CD4-positive, alpha-beta T cell (primary cell): ENCODE measurements at regions of chr2 and their contacts with region 1.

Region 1: DNA sequence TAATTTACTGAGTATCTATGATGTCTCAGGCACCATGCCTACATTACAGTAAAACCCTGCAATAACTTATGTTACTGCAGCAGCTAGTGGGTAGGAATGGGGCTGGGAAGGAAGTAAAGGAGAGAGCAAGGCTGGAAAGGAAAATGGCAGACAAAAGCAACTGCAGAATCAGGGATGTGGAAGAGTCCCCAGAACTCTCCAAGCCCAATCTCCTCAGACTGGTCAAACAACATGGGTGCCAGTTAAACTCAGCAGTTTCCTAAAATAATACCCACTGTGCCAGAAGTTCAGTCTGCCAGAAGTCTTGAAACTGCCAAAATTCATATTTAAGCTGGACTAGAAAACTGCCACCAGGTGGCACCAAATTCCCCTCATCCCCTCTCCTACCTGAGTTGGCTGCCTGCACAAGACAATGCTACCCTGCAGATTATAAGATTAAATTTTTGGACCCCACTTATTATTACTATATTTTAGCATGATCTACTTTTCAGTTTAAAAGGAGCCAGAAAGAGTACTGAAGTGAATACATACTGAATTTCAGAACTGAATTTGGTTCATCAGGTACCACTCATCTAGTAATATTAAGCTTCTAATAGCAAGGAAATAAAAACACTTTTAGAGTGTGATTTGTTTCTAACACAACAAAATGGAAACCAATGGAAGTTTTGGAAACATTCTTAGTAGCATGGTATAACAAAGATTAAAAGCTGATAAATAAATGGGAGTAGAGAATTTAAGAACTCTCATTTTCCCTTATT is 86.8 kb upstream of the DNER start:
- DNase-seq: peak; percentile 62 to 87 (median 70)
- ATAC-seq: peak; percentile 73
- H3K4me3 ChIP-seq: no peak overlapping the region
- H3K4me3 Mint-ChIP-seq: no peak overlapping the region
- H3K27ac ChIP-seq: no peak overlapping the region
- H3K27ac Mint-ChIP-seq: peak overlapping the region; percentile 8
- H3K4me1 ChIP-seq: no peaks in the 10 kb centered on the region
- H3K4me1 Mint-ChIP-seq: peaks cover 11% of the 10 kb centered on the region
- H3K27me3 ChIP-seq: no peaks in the 10 kb centered on the region
- H3K27me3 Mint-ChIP-seq: no peaks in the 10 kb centered on the region
- CTCF ChIP-seq: peak; percentile 87

Region 2: GRCh38 chr2:229815858-229816257 is 14.7 kb after region 1 on chr2:
- CTCF ChIA-PET with region 1: interaction called, 23 read pairs
- POLR2A ChIA-PET with region 1: no interaction called
- intact Hi-C with region 1: no loop called
- DNase-seq: no peak
- ATAC-seq: no peak
- H3K4me3 ChIP-seq: no peak overlapping the region
- H3K4me3 Mint-ChIP-seq: no peak overlapping the region
- H3K27ac ChIP-seq: no peak overlapping the region
- H3K27ac Mint-ChIP-seq: peak overlapping the region; percentile 9
- H3K4me1 ChIP-seq: no peaks in the 10 kb centered on the region
- H3K4me1 Mint-ChIP-seq: peaks cover 7% of the 10 kb centered on the region
- H3K27me3 ChIP-seq: no peaks in the 10 kb centered on the region
- H3K27me3 Mint-ChIP-seq: no peaks in the 10 kb centered on the region
- CTCF ChIP-seq: no peak

Region 3: GRCh38 chr2:229884775-229885699 is 83.9 kb after region 1 on chr2:
- CTCF ChIA-PET with region 1: interaction called, 5 read pairs
- POLR2A ChIA-PET with region 1: no interaction called
- intact Hi-C with region 1: loop called in 1 of 2 experiments (anchors 1 kb)
- DNase-seq: no peak
- ATAC-seq: no peak
- H3K4me3 ChIP-seq: no peak overlapping the region
- H3K4me3 Mint-ChIP-seq: no peak overlapping the region
- H3K27ac ChIP-seq: no peak overlapping the region
- H3K27ac Mint-ChIP-seq: peak overlapping the region; percentile 61
- H3K4me1 ChIP-seq: no peaks in the 10 kb centered on the region
- H3K4me1 Mint-ChIP-seq: peaks cover 65% of the 10 kb centered on the region
- H3K27me3 ChIP-seq: no peaks in the 10 kb centered on the region
- H3K27me3 Mint-ChIP-seq: no peaks in the 10 kb centered on the region
- CTCF ChIP-seq: no peak

Region 4: DNA sequence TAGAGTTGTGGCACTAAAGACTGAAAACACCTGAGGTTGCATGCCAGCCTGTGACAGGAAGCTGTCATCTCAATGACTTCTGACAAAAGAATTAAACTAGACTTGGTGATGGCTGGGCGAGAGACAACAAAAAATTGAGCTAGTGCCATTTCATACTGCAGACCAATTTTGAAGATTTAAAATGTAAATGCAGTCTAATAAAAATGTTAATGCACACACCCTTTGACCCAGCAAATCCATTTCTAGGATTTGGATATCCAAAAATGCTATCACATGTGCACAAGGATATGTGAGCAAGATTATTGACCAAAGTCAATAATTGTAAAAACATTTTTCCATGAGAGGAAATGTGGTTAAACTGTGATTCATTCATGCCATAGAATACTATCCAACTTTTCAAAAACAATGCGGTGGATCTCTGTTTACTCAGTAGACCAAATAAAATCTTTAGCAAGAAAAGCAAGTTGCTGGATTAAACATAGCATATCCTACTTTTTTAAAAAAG is 126.7 kb after region 1 on chr2:
- CTCF ChIA-PET with region 1: interaction called, 10 read pairs
- POLR2A ChIA-PET with region 1: no interaction called
- intact Hi-C with region 1: no loop called
- DNase-seq: no peak
- ATAC-seq: no peak
- H3K4me3 ChIP-seq: no peak overlapping the region
- H3K4me3 Mint-ChIP-seq: no peak overlapping the region
- H3K27ac ChIP-seq: no peak overlapping the region
- H3K27ac Mint-ChIP-seq: no peak overlapping the region
- H3K4me1 ChIP-seq: peaks cover 4% of the 10 kb centered on the region
- H3K4me1 Mint-ChIP-seq: peaks cover 13% of the 10 kb centered on the region
- H3K27me3 ChIP-seq: no peaks in the 10 kb centered on the region
- H3K27me3 Mint-ChIP-seq: no peaks in the 10 kb centered on the region
- CTCF ChIP-seq: no peak

Region 5: GRCh38 chr2:230068016-230068650 is 267.0 kb after region 1 on chr2:
- CTCF ChIA-PET with region 1: no interaction called
- POLR2A ChIA-PET with region 1: no interaction called
- intact Hi-C with region 1: loop called in 1 of 2 experiments (anchors 5 kb)
- DNase-seq: peak in 13 of 14 experiments; percentile 5 to 63 (median 30)
- ATAC-seq: peak; percentile 45
- H3K4me3 ChIP-seq: peak overlapping the region; percentile 50
- H3K4me3 Mint-ChIP-seq: peak overlapping the region; percentile 94
- H3K27ac ChIP-seq: no peak overlapping the region
- H3K27ac Mint-ChIP-seq: peak overlapping the region; percentile 69
- H3K4me1 ChIP-seq: peaks cover 17% of the 10 kb centered on the region
- H3K4me1 Mint-ChIP-seq: peaks cover 6% of the 10 kb centered on the region
- H3K27me3 ChIP-seq: peaks cover 6 to 7% of the 10 kb centered on the region in 2 experiments
- H3K27me3 Mint-ChIP-seq: peaks cover 8% of the 10 kb centered on the region
- CTCF ChIP-seq: no peak

Region 6: DNA sequence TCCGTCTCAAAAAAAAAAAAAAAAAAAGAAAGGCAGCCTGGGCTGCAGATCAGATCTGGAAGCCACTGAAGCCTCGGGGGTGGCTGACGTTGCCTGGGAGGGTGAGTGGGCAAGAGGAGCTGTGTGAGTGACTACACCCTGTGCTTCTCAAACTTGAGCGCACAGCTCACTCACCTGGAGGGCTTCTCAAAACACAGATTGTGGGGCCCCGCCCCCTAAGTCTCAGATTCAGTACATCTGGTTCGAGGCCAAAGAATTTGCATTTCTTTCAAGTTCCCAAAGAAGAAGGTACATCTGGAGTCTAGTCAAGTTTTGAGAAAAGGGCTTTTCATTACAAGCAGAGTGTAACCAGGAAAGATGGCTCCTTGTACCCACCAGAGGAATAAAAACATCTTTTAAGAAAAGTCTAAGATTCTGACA is 813.7 kb after region 1 on chr2:
- CTCF ChIA-PET with region 1: no interaction called
- POLR2A ChIA-PET with region 1: no interaction called
- intact Hi-C with region 1: loop called in 1 of 2 experiments (anchors 2 kb)
- DNase-seq: peak in 3 of 14 experiments; percentile 15 to 52 (median 17)
- ATAC-seq: peak; percentile 43
- H3K4me3 ChIP-seq: no peak overlapping the region
- H3K4me3 Mint-ChIP-seq: no peak overlapping the region
- H3K27ac ChIP-seq: no peak overlapping the region
- H3K27ac Mint-ChIP-seq: no peak overlapping the region
- H3K4me1 ChIP-seq: peaks cover 17% of the 10 kb centered on the region
- H3K4me1 Mint-ChIP-seq: peaks cover 12% of the 10 kb centered on the region
- H3K27me3 ChIP-seq: no peaks in the 10 kb centered on the region
- H3K27me3 Mint-ChIP-seq: no peaks in the 10 kb centered on the region
- CTCF ChIP-seq: no peak